PC-3 (cell line): ENCODE measurements at regions of chr3 and their contacts with region 1.

Region 1: DNA sequence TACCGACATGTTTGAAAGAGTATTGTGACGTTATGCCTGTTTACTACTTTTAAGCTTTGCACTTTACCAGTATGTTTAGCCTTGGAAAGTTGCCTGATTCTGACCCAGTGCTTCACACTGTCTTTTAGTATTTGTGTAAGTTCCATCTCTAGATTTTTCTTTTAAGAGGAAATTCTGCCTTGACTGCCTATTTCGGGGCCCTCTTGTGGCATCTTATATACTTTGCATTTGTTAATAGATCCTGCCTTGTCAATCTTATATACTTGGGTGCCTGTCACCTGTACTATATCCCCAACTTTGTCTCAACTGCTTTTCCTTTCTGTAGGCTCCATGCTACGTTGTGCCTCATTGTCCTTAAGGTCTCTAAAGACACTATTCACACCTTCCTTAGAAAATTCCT is 244.6 kb downstream of the STXBP5L start:
- DNase-seq: peak; percentile 51
- ATAC-seq: peak; percentile 66
- H3K4me3 ChIP-seq: no peak overlapping the region
- H3K27ac ChIP-seq: no peak overlapping the region
- H3K4me1 ChIP-seq: no peaks in the 10 kb centered on the region
- H3K27me3 ChIP-seq: peaks cover 11% of the 10 kb centered on the region; the same call in 1 of the 2 replicates
- CTCF ChIP-seq: peak; percentile 65

Region 2: DNA sequence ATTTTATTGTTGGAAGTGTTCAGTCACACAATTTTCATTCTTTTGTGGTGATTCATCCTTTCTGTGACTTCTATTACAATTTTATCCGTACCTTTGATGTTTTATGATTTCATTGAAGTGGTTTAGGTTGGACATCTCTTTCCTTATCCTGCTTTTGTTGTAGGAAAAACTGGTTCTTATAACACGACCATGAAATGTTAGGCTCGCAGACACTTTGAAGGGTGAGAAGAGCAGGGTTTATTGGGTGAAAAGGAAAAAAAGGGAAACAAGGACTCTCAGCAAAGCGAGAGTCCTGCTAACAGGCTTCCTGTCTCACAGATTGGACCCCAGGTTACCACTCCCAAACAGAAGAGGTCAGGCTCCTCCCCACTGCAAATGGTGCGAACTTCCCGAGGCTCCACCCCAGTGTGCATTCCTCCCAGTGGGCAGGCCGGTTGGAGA is 12.8 kb after region 1 on chr3:
- CTCF ChIA-PET with region 1: no interaction called
- POLR2A ChIA-PET with region 1: no interaction called
- intact Hi-C with region 1: no loop called
- DNase-seq: peak; percentile 66
- ATAC-seq: peak; percentile 48
- H3K4me3 ChIP-seq: no peak overlapping the region
- H3K27ac ChIP-seq: no peak overlapping the region
- H3K4me1 ChIP-seq: peaks cover 8% of the 10 kb centered on the region
- H3K27me3 ChIP-seq: no peaks in the 10 kb centered on the region
- CTCF ChIP-seq: no peak

Region 3: DNA sequence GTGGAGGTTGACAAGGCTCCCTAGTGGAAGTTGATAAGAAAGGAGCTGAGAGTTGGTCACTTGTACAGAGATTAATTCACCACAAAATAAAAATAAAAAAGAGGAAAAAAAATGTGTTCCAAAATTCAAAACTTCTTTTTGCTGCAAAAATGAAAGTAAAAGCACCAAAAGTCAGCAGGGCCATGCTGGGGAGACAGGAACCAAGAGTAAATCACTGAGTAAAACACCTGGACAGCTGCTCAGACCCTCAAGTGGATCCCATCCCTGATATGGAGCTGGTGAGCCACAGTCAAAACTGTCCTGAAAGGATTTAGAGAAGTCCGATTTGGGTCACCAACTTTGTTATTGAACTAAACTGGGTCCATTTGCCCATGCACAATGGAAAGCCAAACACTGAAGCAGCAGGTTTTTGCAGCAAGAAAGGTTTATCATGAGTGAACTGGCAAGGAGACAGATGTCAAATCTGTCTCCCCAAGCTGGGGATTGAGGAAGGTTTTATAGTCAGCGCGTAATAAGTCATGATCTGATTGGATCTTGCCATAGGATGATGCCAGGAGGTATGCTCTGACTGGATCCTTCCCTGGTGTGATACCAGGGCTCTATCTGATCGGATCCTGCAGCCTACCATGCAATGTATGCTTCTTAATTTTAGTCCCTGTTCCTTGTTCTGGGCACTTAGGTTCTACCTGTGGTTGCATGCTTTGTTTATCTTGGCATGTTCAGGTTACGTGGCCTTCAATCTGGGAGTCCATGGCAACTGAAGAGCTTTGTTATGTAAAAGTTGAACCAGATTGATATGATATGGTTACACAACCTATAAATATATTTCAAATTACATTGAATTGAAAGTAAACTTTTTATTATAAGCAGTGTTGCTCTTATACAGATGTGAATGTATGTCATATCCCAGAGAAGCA is 80.0 kb after region 1 on chr3:
- CTCF ChIA-PET with region 1: no interaction called
- POLR2A ChIA-PET with region 1: no interaction called
- intact Hi-C with region 1: no loop called
- DNase-seq: no peak
- ATAC-seq: no peak
- H3K4me3 ChIP-seq: no peak overlapping the region
- H3K27ac ChIP-seq: no peak overlapping the region
- H3K4me1 ChIP-seq: peaks cover 10% of the 10 kb centered on the region
- H3K27me3 ChIP-seq: peaks cover 18% of the 10 kb centered on the region
- CTCF ChIP-seq: no peak

Region 4: GRCh38 chr3:121269389-121269788 is 116.8 kb after region 1 on chr3:
- CTCF ChIA-PET with region 1: no interaction called
- POLR2A ChIA-PET with region 1: no interaction called
- intact Hi-C with region 1: no loop called
- DNase-seq: no peak
- ATAC-seq: no peak
- H3K4me3 ChIP-seq: no peak overlapping the region
- H3K27ac ChIP-seq: no peak overlapping the region
- H3K4me1 ChIP-seq: no peaks in the 10 kb centered on the region
- H3K27me3 ChIP-seq: no peaks in the 10 kb centered on the region; the same call in 1 of the 2 replicates
- CTCF ChIP-seq: no peak

Region 5: GRCh38 chr3:121488628-121489027 is 336.1 kb after region 1 on chr3:
- CTCF ChIA-PET with region 1: no interaction called
- POLR2A ChIA-PET with region 1: no interaction called
- intact Hi-C with region 1: loop called (anchors 5 kb)
- DNase-seq: peak; percentile 24
- ATAC-seq: peak; percentile 71; the same call in 1 of the 2 replicates
- H3K4me3 ChIP-seq: no peak overlapping the region
- H3K27ac ChIP-seq: no peak overlapping the region
- H3K4me1 ChIP-seq: no peaks in the 10 kb centered on the region
- H3K27me3 ChIP-seq: no peaks in the 10 kb centered on the region
- CTCF ChIP-seq: peak; percentile 56